CD8-positive, alpha-beta memory T cell (primary cell): ENCODE measurements at regions of chr4 and their contacts with region 1.

Region 1: DNA sequence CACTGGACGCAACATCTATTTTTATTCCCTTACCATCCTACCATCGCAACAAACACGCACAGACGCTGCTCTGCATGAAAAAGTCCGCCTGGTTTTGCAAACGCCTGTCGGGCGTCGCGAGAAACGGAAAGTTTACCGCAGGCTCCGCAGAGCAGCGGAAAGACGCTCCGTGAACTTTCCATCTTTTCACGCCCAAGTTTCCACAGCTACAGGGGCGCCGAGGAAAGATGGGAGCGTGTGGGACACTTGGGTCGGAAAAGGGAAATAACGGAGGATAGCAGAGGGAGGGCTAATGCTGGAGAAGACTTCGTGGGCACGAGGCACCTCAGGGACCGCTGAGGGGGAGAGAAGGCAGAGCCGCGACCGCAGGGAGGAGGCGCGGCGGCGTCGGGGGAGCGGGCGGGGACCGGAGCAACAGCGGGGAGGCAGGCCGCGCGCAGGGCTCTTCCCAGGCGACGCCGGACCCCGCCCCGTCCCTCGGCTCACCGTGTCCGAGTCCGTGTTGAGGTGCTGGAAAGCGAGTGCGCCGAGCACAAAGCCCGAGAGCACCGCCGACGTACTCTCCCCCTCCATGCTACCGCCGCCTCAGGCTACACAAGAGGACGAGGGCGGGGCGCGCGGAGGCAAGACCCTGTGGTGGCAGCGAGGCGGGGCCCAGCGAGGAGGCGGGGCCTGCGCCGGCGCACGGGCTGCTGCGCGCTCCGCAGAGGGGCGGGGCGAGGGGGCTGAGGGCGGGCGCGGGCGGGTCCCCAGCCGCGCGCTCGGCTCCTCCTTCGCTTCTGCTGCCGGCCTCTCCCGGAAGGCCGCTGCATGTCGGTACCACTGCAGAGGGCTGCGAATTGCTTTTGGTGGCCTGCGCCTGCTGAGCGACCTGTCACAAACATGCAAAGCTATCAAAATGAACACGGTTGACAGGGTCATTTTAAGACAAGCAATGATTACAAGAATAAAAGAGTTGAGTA is at the start of gene ABRAXAS1:
- DNase-seq: peak; percentile 92 to 96 (median 95)
- H3K4me3 ChIP-seq: peak within 1 kb of the TSS; percentile 85
- H3K4me3 Mint-ChIP-seq: peak within 1 kb of the TSS; percentile 95 to 99 (median 96)
- H3K27ac ChIP-seq: peak within 1 kb of the TSS; percentile 64
- H3K27ac Mint-ChIP-seq: peak within 1 kb of the TSS; percentile 93 to 99 (median 96)
- H3K4me1 ChIP-seq: peaks cover 15% of the 10 kb centered on the region
- H3K4me1 Mint-ChIP-seq: peaks cover 22 to 36% (median 35%) of the 10 kb centered on the region in 3 donors
- H3K27me3 ChIP-seq: no peaks in the 10 kb centered on the region
- H3K27me3 Mint-ChIP-seq: peaks cover 0 to 3% of the 10 kb centered on the region in 2 donors
- total RNA-seq, gene ABRAXAS1: 10.8 to 11.0 TPM

Region 2: DNA sequence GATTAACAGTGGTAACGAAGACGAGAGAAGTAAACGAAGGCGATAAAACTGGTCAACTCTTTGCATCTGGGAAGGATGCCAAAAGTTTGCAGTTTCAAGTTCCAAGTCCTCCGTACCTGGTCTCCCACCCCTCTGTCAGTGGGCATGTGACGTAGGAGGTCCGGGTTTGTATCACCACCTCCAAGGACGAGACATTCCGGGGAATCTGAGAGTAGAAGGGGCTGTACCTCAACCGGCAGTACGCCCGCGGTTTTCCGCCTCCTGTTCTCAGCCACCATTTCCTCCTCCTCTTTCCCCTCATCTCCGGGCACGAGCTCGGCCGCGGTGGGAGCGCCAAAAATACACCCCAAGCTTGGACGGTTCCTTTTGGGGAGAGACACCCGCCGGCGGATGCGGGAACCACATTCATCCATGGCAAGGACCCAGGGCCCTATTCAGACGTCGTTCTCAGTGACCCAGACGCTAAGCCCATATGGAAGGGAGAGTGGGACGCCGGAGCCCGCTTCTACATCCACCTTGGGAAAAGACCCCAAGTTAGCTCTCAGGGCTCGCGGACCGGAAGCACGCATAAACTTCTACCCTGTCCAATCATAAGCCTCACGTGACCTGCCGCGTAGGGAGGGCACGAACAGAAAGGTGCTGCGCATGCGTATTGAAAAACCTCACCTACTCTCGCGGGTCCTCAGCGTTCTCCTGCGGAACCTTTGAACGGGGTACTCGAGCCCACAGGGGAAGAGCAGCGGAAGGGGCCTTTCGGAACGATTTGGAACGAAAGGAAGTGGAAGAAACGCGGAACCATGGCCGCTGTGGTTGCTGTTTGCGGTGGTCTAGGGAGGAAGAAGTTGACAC is 29.3 kb before region 1 on chr4 and contains the starts of genes HELQ and MRPS18C:
- CTCF ChIA-PET with region 1: no interaction called
- POLR2A ChIA-PET with region 1: interaction called, 24 read pairs
- DNase-seq: peak; percentile 90 to 99 (median 96)
- H3K4me3 ChIP-seq: peak within 1 kb of the TSS; percentile 80
- H3K4me3 Mint-ChIP-seq: peak within 1 kb of the TSS; percentile 98 to 100 (median 100)
- H3K27ac ChIP-seq: peak within 1 kb of the TSS; percentile 99
- H3K27ac Mint-ChIP-seq: peak within 1 kb of the TSS; percentile 100
- H3K4me1 ChIP-seq: peaks cover 35% of the 10 kb centered on the region
- H3K4me1 Mint-ChIP-seq: peaks cover 43 to 73% (median 67%) of the 10 kb centered on the region in 3 donors
- H3K27me3 ChIP-seq: no peaks in the 10 kb centered on the region
- H3K27me3 Mint-ChIP-seq: peaks cover 0 to 2% of the 10 kb centered on the region in 2 donors
- total RNA-seq, gene HELQ: 14.0 to 15.3 TPM
- total RNA-seq, gene MRPS18C: 86.0 to 87.2 TPM